ENCODE measurements at regions of chr9 and their contacts with region 1.

Region 1: DNA sequence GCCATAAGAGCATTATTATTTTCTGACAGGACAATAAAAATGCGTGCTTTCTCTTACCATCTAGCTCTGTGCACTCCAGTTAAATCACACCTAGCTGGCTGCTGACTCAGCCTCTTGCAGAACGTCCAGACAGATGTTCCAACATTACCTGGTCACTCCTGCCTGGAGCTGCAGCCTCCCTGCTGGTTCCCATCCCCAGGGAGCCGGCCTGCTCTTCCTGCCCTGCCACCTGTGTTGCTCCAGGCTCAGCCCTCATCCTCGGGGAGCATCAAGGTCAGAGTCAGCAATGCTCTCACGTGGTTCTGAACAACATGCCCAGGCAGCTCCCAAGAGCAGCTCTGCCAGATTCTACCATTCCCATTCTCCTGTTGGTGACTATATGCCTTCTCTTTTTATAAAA is 81.3 kb downstream of the GADD45G start:
- DNase-seq: no peak
- H3K4me3 ChIP-seq: no peak overlapping the region
- H3K4me1 ChIP-seq: peaks cover 4% of the 10 kb centered on the region; the same call in 1 of the 2 replicates
- H3K27me3 ChIP-seq: no peaks in the 10 kb centered on the region

Region 2: GRCh38 chr9:89738137-89738932 is 52.2 kb after region 1 on chr9:
- in situ Hi-C with region 1: loop called (anchors 5 kb)
- DNase-seq: peak; percentile 28 to 41
- H3K4me3 ChIP-seq: no peak overlapping the region
- H3K4me1 ChIP-seq: peaks cover 10% of the 10 kb centered on the region
- H3K27me3 ChIP-seq: no peaks in the 10 kb centered on the region